ENCODE measurements at regions of chr17 and their contacts with region 1.

Region 1: GRCh38 chr17:81253358-81254131 is 14.4 kb downstream of the NDUFAF8 start:
- DNase-seq: peak in 2 of 6 donors; percentile 38 to 49
- ATAC-seq: peak; percentile 43 to 57 (median 44)
- H3K4me3 ChIP-seq: no peak overlapping the region
- H3K27ac ChIP-seq: no peak overlapping the region
- H3K4me1 ChIP-seq: no peaks in the 10 kb centered on the region
- H3K27me3 ChIP-seq: no peaks in the 10 kb centered on the region
- CTCF ChIP-seq: peak; percentile 27 to 57 (median 54)

Region 2: GRCh38 chr17:81601525-81602120 is 348.1 kb after region 1 on chr17:
- intact Hi-C with region 1: loop called in 2 of 3 experiments (anchors 10 kb)
- DNase-seq: peak in 2 of 6 donors; percentile 18 to 51
- ATAC-seq: peak; percentile 88 to 97 (median 94)
- H3K4me3 ChIP-seq: no peak overlapping the region
- H3K27ac ChIP-seq: no peak overlapping the region
- H3K4me1 ChIP-seq: no peaks in the 10 kb centered on the region
- H3K27me3 ChIP-seq: no peaks in the 10 kb centered on the region
- CTCF ChIP-seq: peak; percentile 69 to 79 (median 76)

Measured in pancreas (tissue), 10 donors.